ENCODE measurements at regions of chr2 and their contacts with region 1.

Region 1: DNA sequence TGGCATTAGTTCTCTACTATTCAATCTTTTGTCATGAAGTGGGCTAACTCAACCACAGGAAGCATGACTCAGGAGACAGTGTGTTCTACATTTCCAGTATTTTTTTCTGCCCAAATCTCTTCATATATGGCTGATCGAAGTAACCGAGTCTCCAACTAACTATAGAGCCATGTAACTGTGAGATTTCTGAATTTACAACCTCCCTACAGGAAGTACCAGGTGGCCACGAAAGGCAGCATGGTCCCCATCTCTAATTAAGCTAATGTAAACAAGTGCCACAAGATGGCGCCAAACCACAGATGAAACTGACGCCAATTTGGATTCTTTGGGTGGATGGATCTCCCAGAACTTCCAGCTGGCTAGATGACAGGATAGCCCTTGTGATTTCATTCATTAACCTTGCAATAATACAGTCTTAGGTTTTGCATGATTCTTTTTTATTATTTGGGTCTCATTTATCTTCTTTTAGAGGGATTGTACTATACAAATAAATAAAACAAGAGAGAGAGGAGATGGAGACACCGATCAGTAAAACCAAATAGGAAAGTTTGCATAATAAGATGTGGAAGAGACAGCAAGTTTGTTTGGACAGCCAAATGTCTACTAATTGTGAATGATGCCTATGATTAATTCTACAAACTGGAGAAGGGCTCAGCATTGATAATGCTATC is 18.3 kb upstream of the ARHGAP15 start:
- DNase-seq: peak; percentile 82
- H3K4me3 Mint-ChIP-seq: peak overlapping the region; percentile 59
- H3K27ac Mint-ChIP-seq: peak overlapping the region; percentile 90
- H3K4me1 Mint-ChIP-seq: peaks cover 46% of the 10 kb centered on the region
- H3K27me3 Mint-ChIP-seq: no peaks in the 10 kb centered on the region

Region 2: DNA sequence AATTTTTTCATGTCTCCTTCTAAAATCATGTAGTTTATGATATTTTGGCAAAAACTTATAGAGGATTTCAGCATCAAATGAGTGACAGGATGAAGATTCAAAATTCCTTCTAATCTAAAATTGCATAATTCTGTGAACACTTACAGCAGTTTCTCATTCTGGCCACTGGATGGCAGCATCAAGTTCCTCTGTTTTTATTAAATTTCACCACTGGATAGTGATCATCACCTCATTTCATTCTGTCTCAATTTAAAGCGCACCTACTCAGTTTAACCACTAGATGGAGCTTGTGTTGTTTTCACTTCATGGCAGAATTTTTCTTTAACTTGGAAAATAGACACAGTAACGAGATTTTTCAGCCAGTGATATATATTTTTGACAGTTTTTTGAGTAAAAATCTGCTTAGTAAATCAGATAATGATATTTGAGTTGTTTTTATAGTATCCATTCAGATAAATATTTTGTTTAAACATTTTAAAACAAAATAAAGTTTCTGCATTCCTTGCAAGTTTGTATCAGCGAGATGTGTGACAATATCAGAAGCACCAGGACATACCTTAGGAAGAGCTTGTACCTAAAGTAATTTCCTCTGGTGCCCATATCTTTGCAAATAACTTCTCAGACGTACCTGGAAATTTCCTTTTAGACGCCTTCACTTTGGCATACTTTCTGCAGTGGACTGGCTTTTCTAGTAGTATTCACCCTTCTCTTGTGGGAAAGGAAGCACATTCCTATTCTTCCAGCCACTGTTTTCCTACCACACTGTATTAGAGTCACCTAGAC is 76.4 kb before region 1 on chr2:
- CTCF ChIA-PET with region 1: interaction called, 44 read pairs
- intact Hi-C with region 1: loop called (anchors 1 kb)
- DNase-seq: peak; percentile 78
- H3K4me3 Mint-ChIP-seq: no peak overlapping the region
- H3K27ac Mint-ChIP-seq: no peak overlapping the region
- H3K4me1 Mint-ChIP-seq: peaks cover 14% of the 10 kb centered on the region
- H3K27me3 Mint-ChIP-seq: peaks cover 7% of the 10 kb centered on the region

Region 3: DNA sequence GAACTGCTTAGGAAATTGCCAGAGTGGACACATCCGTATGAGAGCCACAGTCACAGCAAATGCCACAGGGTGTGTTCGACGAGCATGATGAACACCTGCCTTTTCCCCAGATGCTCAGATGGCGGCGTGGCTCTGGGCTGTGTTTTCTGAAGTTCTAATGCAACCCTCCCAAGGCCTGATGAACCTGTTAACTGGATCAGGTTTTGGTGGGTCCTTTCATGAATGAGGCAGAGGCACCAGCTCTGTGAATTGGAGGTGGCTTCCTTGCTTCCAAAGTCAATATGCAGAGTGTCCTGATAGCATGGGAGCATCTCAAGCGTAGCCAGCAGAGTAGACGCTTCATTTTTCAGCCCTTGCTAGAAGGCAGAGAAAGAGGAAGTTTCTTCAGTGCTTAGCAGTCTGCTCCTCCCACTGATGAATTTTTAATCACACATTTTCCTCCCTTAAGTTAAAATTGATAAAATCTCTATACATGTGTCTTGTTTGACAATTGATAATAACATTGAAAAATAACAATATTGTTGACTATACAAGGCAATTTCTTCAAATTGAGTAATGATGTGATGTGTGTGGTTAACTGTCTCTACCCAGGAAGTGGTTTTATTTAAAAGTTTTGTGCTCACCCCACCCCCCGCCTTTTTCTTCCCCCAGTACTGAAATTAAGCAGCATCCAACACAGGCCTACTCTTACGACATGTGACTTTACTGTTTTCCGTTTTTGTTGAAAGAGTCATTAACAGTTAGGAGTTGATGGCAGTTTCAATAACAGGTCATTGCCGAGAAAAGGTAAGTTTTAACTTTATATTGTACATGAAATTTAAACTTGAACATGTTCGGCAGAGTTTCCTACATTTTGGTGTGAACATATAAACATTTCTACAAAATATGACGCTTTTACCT is 18.0 kb after region 1 on chr2 and contains the start of gene ARHGAP15:
- CTCF ChIA-PET with region 1: interaction called, 47 read pairs
- intact Hi-C with region 1: no loop called
- DNase-seq: peak; percentile 88
- H3K4me3 Mint-ChIP-seq: peak within 1 kb of the TSS; percentile 86
- H3K27ac Mint-ChIP-seq: peak within 1 kb of the TSS; percentile 100
- H3K4me1 Mint-ChIP-seq: peaks cover 31% of the 10 kb centered on the region
- H3K27me3 Mint-ChIP-seq: no peaks in the 10 kb centered on the region
- total RNA-seq, gene ARHGAP15: 85.7 to 90.1 TPM

Region 4: DNA sequence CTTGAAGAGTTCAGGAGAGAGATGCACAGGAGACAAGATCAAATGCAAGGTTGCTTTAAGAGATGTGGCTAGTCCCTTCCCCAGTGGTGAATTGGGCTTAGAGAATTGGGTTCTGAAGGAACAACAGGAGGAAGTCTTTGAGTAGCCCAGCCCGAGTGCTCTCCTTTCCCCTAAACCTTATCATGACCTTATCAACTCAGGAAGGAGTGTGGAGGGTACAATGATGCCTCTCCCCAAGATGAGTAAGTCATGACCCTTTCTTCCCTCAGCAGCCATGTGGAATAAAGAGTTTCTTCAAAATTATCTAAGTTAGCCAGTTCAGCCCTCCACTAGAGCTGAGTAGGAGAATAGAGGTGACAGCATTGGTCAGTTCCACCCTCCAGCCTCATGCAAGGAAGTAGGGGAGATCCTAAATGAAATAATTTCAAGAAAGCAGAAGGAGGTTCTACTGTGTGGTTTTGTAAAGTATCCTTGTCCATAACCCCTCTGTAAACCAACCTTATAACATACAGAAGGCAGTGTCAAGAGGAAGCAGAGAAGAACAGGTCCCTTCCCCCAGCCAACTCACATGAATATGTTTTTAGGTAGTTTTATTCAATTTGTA is 106.7 kb after region 1 on chr2:
- CTCF ChIA-PET with region 1: interaction called, 72 read pairs
- intact Hi-C with region 1: loop called (anchors 1 kb)
- DNase-seq: no peak
- H3K4me3 Mint-ChIP-seq: no peak overlapping the region
- H3K27ac Mint-ChIP-seq: peak overlapping the region; percentile 48
- H3K4me1 Mint-ChIP-seq: peaks cover 32% of the 10 kb centered on the region
- H3K27me3 Mint-ChIP-seq: no peaks in the 10 kb centered on the region

Region 5: GRCh38 chr2:143246815-143247744 is 136.2 kb after region 1 on chr2:
- CTCF ChIA-PET with region 1: interaction called, 14 read pairs
- intact Hi-C with region 1: no loop called
- DNase-seq: peak; percentile 27
- H3K4me3 Mint-ChIP-seq: peak overlapping the region; percentile 44
- H3K27ac Mint-ChIP-seq: peak overlapping the region; percentile 43
- H3K4me1 Mint-ChIP-seq: peaks cover 30% of the 10 kb centered on the region
- H3K27me3 Mint-ChIP-seq: no peaks in the 10 kb centered on the region

Region 6: GRCh38 chr2:143397884-143398614 is 287.2 kb after region 1 on chr2:
- CTCF ChIA-PET with region 1: no interaction called
- intact Hi-C with region 1: loop called (anchors 5 kb)
- DNase-seq: no peak
- H3K4me3 Mint-ChIP-seq: no peak overlapping the region
- H3K27ac Mint-ChIP-seq: peak overlapping the region; percentile 11
- H3K4me1 Mint-ChIP-seq: peaks cover 47% of the 10 kb centered on the region
- H3K27me3 Mint-ChIP-seq: no peaks in the 10 kb centered on the region

Measured in activated naive CD4-positive, alpha-beta T cell treated with anti-CD3 and anti-CD28 coated beads for 36 hours (primary cell).